ENCODE measurements at regions of chr19 and their contacts with region 1.

Region 1: GRCh38 chr19:13861732-13862531 is 15.0 kb upstream of the NANOS3 start:
- DNase-seq: peak; percentile 81 to 94 (median 84)
- H3K4me3 ChIP-seq: peak overlapping the region; percentile 55 to 68
- H3K4me3 Mint-ChIP-seq: peak overlapping the region; percentile 91 to 98 (median 95)
- H3K27ac ChIP-seq: peak overlapping the region; percentile 96
- H3K27ac Mint-ChIP-seq: peak overlapping the region; percentile 98 to 100 (median 100)
- H3K4me1 ChIP-seq: peaks cover 35% of the 10 kb centered on the region
- H3K4me1 Mint-ChIP-seq: peaks cover 24 to 54% (median 38%) of the 10 kb centered on the region in 4 donors
- H3K27me3 ChIP-seq: peaks cover 19% of the 10 kb centered on the region
- H3K27me3 Mint-ChIP-seq: peaks cover 16 to 20% of the 10 kb centered on the region in 2 donors

Region 2: DNA sequence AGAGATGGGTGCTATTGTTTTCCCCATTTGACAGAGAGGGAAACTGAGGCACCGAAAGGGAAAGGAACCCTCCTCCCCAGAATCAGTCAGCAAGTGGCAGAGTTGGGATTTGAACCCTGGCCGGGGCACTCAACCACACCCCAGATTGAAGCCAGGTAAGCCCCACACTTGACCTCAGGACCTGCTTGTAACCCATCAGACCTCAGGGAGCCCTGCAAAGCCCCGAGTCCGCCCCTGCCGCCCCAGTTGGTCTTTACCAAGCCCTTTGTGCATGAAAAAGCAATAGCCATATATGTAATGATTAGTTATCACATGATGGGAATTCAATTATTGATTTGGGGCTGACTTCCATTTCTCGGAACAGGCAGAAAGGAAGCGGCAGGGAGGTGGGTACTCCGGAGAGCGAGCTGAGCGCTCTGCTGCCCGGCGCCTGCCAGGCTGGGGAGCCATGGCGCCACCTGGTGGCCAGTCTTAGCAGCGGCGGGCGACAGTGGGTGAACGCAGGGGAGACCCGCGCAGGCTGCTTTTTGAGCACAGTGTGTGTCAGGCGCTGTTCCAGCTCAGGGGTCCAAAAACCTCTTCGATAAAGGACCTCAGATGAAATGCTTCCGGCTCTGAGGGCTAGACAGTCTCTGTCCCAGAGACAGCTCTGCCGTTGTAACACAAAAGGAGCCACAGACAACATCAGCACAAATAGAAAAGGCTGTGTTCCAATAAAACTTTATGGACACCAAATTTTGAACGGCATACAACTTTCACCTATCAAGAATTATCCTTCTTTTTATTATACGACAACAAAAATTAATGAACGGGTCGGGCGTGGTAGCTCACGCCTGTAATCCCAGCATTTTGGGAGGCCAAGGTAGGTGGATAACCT is 272.7 kb before region 1 on chr19:
- CTCF ChIA-PET with region 1: interaction called, 14 read pairs
- POLR2A ChIA-PET with region 1: no interaction called
- intact Hi-C with region 1: no loop called
- DNase-seq: peak; percentile 63 to 79 (median 77)
- H3K4me3 ChIP-seq: no peak overlapping the region
- H3K4me3 Mint-ChIP-seq: peak overlapping the region in 1 of 8 donors; percentile 20
- H3K27ac ChIP-seq: no peak overlapping the region
- H3K27ac Mint-ChIP-seq: no peak overlapping the region
- H3K4me1 ChIP-seq: peaks cover 7% of the 10 kb centered on the region
- H3K4me1 Mint-ChIP-seq: no peaks in the 10 kb centered on the region
- H3K27me3 ChIP-seq: no peaks in the 10 kb centered on the region
- H3K27me3 Mint-ChIP-seq: peaks cover 2 to 6% of the 10 kb centered on the region in 2 donors

Region 3: DNA sequence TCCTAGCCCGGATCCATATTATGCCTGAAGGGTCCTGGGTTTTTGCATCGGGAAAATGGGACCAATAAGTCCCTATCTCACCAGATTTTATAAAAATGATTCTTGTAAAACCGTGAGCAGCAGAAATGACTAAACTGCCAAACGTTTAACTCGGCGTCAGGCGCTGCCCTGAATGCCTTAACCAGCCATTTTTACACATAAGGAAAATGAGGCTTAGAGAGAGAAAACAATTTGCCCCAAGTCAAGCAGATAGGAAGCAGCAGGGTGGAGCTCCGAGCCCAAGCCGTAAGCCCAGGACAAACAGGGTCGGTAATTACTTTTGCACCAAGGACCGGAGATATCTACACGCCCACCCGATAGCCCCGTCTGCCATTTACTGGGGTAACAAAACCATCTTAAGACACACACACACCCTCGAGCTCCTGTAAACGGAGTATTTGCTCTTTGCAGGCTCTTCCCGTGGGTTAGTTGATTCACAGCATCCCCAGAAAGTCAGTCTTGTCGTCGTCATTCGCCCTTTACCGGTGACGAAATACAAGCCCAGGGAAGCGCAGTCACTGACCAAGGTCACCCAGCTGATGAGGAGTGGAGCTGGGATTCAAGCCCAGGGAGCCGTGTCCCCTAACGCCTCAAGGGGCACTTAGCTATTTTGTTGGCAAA is 113.6 kb before region 1 on chr19:
- CTCF ChIA-PET with region 1: no interaction called
- POLR2A ChIA-PET with region 1: interaction called, 14 read pairs
- intact Hi-C with region 1: no loop called
- DNase-seq: no peak
- H3K4me3 ChIP-seq: peak overlapping the region; percentile 77 to 89
- H3K4me3 Mint-ChIP-seq: peak overlapping the region; percentile 88 to 92 (median 92)
- H3K27ac ChIP-seq: peak overlapping the region; percentile 87
- H3K27ac Mint-ChIP-seq: peak overlapping the region; percentile 83 to 97 (median 96)
- H3K4me1 ChIP-seq: peaks cover 29% of the 10 kb centered on the region
- H3K4me1 Mint-ChIP-seq: peaks cover 15 to 44% (median 18%) of the 10 kb centered on the region in 4 donors
- H3K27me3 ChIP-seq: no peaks in the 10 kb centered on the region
- H3K27me3 Mint-ChIP-seq: no peaks in the 10 kb centered on the region

Region 4: DNA sequence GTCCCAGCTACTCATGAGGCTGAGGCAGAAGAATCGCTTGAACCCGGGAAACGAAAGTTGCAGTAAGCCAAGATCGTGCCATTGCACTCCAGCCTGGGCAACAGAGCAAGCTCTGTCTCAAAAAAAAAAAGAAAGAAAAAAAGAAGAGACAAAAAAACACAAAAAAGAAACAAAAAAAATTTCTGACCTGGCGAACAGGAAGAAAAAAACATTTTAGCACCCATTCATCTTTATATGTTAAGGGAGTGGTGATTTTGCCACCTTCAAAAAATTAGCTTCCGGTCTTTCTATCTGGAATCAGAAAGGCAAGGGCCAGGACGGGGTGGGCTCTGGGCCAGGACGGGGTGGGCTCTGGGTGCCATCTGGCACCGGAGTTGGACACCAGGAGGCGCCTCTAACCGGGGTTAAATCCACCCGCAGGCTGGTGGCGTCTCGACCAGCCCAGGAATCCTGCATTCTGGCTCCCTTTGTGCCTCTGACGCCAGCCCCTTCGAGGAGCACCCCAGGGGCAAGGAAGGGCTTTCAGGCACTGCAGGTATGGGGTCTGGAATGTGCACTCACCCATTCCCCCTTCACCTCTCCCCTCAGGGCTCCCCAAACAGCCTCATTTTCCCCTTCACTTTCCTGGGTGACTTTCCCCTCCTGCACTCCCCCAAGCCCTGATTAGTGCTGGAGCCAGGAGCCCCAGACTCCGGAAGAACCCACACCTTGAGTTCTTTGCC is 77.0 kb before region 1 on chr19:
- CTCF ChIA-PET with region 1: interaction called, 307 read pairs
- POLR2A ChIA-PET with region 1: interaction called, 153 read pairs
- intact Hi-C with region 1: loop called (anchors 1 kb)
- DNase-seq: peak; percentile 63 to 71 (median 66)
- H3K4me3 ChIP-seq: no peak overlapping the region
- H3K4me3 Mint-ChIP-seq: peak overlapping the region in 7 of 8 donors; percentile 21 to 70 (median 64)
- H3K27ac ChIP-seq: no peak overlapping the region
- H3K27ac Mint-ChIP-seq: peak overlapping the region; percentile 12 to 91 (median 80)
- H3K4me1 ChIP-seq: peaks cover 42% of the 10 kb centered on the region
- H3K4me1 Mint-ChIP-seq: peaks cover 12 to 37% (median 24%) of the 10 kb centered on the region in 4 donors
- H3K27me3 ChIP-seq: no peaks in the 10 kb centered on the region
- H3K27me3 Mint-ChIP-seq: no peaks in the 10 kb centered on the region

Region 5: GRCh38 chr19:13833330-13834243 is 28.3 kb before region 1 on chr19:
- CTCF ChIA-PET with region 1: interaction called, 37 read pairs
- POLR2A ChIA-PET with region 1: interaction called, 113 read pairs
- intact Hi-C with region 1: no loop called
- DNase-seq: peak; percentile 90 to 94 (median 91)
- H3K4me3 ChIP-seq: peak overlapping the region; percentile 36 to 47
- H3K4me3 Mint-ChIP-seq: peak overlapping the region; percentile 83 to 88 (median 86)
- H3K27ac ChIP-seq: peak overlapping the region; percentile 92
- H3K27ac Mint-ChIP-seq: peak overlapping the region; percentile 96 to 100 (median 97)
- H3K4me1 ChIP-seq: peaks cover 49% of the 10 kb centered on the region
- H3K4me1 Mint-ChIP-seq: peaks cover 17 to 50% (median 30%) of the 10 kb centered on the region in 4 donors
- H3K27me3 ChIP-seq: no peaks in the 10 kb centered on the region
- H3K27me3 Mint-ChIP-seq: no peaks in the 10 kb centered on the region

Region 6: DNA sequence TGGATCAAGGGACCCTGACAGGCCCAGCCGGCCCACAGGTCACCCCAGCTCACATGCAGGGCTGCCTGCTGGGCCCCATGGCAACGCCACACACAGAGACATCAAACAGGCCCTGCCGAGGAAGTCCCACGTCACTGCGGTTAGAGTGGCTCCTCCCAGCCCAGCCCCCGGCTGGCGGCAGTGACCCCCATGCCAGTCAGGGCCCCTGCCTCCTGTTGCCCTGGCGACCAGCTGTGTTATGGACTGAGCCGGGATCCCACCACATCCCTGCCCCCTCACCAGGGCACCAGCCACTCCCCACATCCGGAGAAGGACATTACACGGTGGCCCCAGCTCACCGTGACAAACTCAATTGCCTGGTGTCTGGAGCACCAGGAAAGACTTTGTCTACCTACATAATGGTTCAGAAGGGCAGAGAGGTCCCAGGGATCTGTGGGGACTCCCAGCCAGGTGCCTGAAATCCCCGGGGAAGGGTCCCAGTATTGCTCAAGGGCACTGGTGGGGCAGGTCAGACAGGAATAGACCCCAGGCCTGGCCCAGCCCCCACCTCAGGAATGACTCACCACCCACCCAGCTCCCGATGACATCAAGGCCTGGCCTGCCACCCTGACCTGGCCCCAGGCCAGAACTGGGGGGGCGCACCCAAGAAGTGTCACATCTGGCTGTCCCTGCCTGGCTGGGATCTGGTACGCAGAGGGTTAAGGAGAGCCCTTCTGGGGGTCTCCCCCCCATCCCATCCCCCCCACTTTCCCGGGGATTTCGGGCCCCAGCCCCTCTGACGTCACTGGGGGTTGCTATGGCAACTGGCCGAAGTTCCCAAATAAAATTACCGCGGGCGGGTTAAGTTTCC is 15.2 kb before region 1 on chr19:
- CTCF ChIA-PET with region 1: interaction called, 46 read pairs
- POLR2A ChIA-PET with region 1: interaction called, 113 read pairs
- intact Hi-C with region 1: loop called (anchors 1 kb)
- DNase-seq: peak; percentile 99
- H3K4me3 ChIP-seq: peak overlapping the region; percentile 50 to 79
- H3K4me3 Mint-ChIP-seq: peak overlapping the region; percentile 83 to 98 (median 90)
- H3K27ac ChIP-seq: peak overlapping the region; percentile 99
- H3K27ac Mint-ChIP-seq: peak overlapping the region; percentile 99 to 100 (median 100)
- H3K4me1 ChIP-seq: peaks cover 69% of the 10 kb centered on the region
- H3K4me1 Mint-ChIP-seq: peaks cover 33 to 77% (median 50%) of the 10 kb centered on the region in 4 donors
- H3K27me3 ChIP-seq: no peaks in the 10 kb centered on the region
- H3K27me3 Mint-ChIP-seq: peaks cover 0 to 4% of the 10 kb centered on the region in 2 donors